Brain microvascular endothelial cell (primary cell): ENCODE measurements at regions of chr4 and their contacts with region 1.

Region 1: GRCh38 chr4:155353923-155354540 is 22.7 kb downstream of the MAP9 start:
- DNase-seq: peak; percentile 69
- H3K4me3 ChIP-seq: no peak overlapping the region
- H3K27ac ChIP-seq: no peak overlapping the region
- H3K27me3 ChIP-seq: no peaks in the 10 kb centered on the region
- CTCF ChIP-seq: peak; percentile 89

Region 2: GRCh38 chr4:154982187-154983047 is 371.6 kb before region 1 on chr4:
- in situ Hi-C with region 1: loop called (anchors 25 kb)
- DNase-seq: peak; percentile 40
- H3K4me3 ChIP-seq: no peak overlapping the region
- H3K27ac ChIP-seq: no peak overlapping the region
- H3K27me3 ChIP-seq: no peaks in the 10 kb centered on the region
- CTCF ChIP-seq: peak; percentile 83